Activated CD4-positive, alpha-beta memory T cell treated with anti-CD3 and anti-CD28 coated beads for 36 hours (primary cell): ENCODE measurements at regions of chr13 and their contacts with region 1.

Region 1: DNA sequence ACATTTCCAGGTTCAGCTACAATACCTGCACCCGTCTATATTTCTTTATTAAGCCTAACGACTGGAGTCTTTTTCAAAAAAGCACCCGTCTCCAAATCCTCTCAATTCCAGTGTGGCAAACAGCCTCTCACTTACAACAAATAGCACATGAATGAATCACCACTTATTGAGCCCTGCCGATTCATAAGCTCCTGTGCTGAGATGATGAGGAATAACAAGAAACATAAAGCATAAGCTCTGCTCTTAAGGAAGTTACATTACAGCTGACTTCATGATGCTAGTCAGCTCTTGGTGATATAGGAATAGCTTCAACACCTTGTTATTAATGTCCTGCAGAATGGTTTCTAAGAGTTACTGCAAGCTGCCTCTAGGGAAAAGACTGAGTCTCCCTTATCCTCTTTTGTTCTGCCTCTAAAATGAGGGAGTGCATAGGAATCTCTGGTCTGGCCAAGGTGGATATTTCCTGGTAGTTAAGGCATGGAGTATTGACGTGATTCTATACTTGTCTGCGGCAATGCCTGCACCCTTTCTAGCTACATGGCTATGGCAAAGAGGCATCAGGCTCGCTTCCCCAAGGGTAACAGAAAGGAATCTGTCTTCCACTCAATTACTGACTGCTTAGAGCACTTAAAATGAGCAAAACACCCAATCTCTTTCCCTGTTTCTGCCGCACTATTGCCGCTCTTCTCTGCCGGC is 195.7 kb downstream of the KLF12 start:
- DNase-seq: no peak
- H3K4me3 Mint-ChIP-seq: no peak overlapping the region
- H3K27ac Mint-ChIP-seq: no peak overlapping the region
- H3K4me1 Mint-ChIP-seq: peaks cover 77% of the 10 kb centered on the region
- H3K27me3 Mint-ChIP-seq: no peaks in the 10 kb centered on the region

Region 2: GRCh38 chr13:73865027-73865426 is 73.5 kb before region 1 on chr13:
- CTCF ChIA-PET with region 1: no interaction called
- POLR2A ChIA-PET with region 1: no interaction called
- intact Hi-C with region 1: loop called (anchors 2 kb)
- DNase-seq: no peak
- H3K4me3 Mint-ChIP-seq: no peak overlapping the region
- H3K27ac Mint-ChIP-seq: no peak overlapping the region
- H3K4me1 Mint-ChIP-seq: peaks cover 54% of the 10 kb centered on the region
- H3K27me3 Mint-ChIP-seq: no peaks in the 10 kb centered on the region